ENCODE measurements at regions of chr10 and their contacts with region 1.

Region 1: GRCh38 chr10:101782811-101783735 is at the start of gene NPM3:
- DNase-seq: peak; percentile 94
- ATAC-seq: peak; percentile 82
- H3K4me3 Mint-ChIP-seq: peak within 1 kb of the TSS; percentile 94
- H3K27ac Mint-ChIP-seq: peak within 1 kb of the TSS; percentile 97
- H3K4me1 Mint-ChIP-seq: peaks cover 52% of the 10 kb centered on the region
- H3K27me3 Mint-ChIP-seq: peaks cover 6% of the 10 kb centered on the region
- total RNA-seq, gene NPM3: 207 to 214 TPM

Region 2: GRCh38 chr10:100535715-100536353 is 1247.2 kb before region 1 on chr10 and contains the start of gene HIF1AN:
- CTCF ChIA-PET with region 1: no interaction called
- POLR2A ChIA-PET with region 1: no interaction called
- intact Hi-C with region 1: loop called in 1 of 2 experiments (anchors 10 kb)
- DNase-seq: peak; percentile 93
- ATAC-seq: peak; percentile 96
- H3K4me3 Mint-ChIP-seq: no peak within 1 kb of the TSS
- H3K27ac Mint-ChIP-seq: no peak within 1 kb of the TSS
- H3K4me1 Mint-ChIP-seq: peaks cover 27% of the 10 kb centered on the region
- H3K27me3 Mint-ChIP-seq: no peaks in the 10 kb centered on the region
- total RNA-seq, gene HIF1AN: 45.9 to 50.8 TPM

Region 3: GRCh38 chr10:101297901-101298486 is 485.1 kb before region 1 on chr10:
- CTCF ChIA-PET with region 1: no interaction called
- POLR2A ChIA-PET with region 1: no interaction called
- intact Hi-C with region 1: loop called in 1 of 2 experiments (anchors 5 kb)
- DNase-seq: peak; percentile 89
- ATAC-seq: peak; percentile 90
- H3K4me3 Mint-ChIP-seq: no peak overlapping the region
- H3K27ac Mint-ChIP-seq: no peak overlapping the region
- H3K4me1 Mint-ChIP-seq: peaks cover 2% of the 10 kb centered on the region
- H3K27me3 Mint-ChIP-seq: peaks cover 41% of the 10 kb centered on the region

Region 4: GRCh38 chr10:101587725-101588653 is 195.1 kb before region 1 on chr10 and contains the starts of genes DPCD and POLL:
- CTCF ChIA-PET with region 1: interaction called, 4 read pairs
- POLR2A ChIA-PET with region 1: no interaction called
- intact Hi-C with region 1: loop called (anchors 1 to 5 kb)
- DNase-seq: peak; percentile 97
- ATAC-seq: peak; percentile 98
- H3K4me3 Mint-ChIP-seq: peak within 1 kb of the TSS; percentile 86
- H3K27ac Mint-ChIP-seq: peak within 1 kb of the TSS; percentile 81
- H3K4me1 Mint-ChIP-seq: peaks cover 18% of the 10 kb centered on the region
- H3K27me3 Mint-ChIP-seq: no peaks in the 10 kb centered on the region
- total RNA-seq, gene DPCD: 15.5 to 19.3 TPM
- total RNA-seq, gene POLL: 30.2 to 31.4 TPM

Region 5: GRCh38 chr10:101693978-101694673 is 88.9 kb before region 1 on chr10:
- CTCF ChIA-PET with region 1: interaction called, 10 read pairs
- POLR2A ChIA-PET with region 1: no interaction called
- intact Hi-C with region 1: loop called (anchors 1 to 2 kb)
- DNase-seq: peak; percentile 80
- ATAC-seq: peak; percentile 76
- H3K4me3 Mint-ChIP-seq: peak overlapping the region; percentile 88
- H3K27ac Mint-ChIP-seq: peak overlapping the region; percentile 97
- H3K4me1 Mint-ChIP-seq: peaks cover 43% of the 10 kb centered on the region
- H3K27me3 Mint-ChIP-seq: no peaks in the 10 kb centered on the region

Region 6: DNA sequence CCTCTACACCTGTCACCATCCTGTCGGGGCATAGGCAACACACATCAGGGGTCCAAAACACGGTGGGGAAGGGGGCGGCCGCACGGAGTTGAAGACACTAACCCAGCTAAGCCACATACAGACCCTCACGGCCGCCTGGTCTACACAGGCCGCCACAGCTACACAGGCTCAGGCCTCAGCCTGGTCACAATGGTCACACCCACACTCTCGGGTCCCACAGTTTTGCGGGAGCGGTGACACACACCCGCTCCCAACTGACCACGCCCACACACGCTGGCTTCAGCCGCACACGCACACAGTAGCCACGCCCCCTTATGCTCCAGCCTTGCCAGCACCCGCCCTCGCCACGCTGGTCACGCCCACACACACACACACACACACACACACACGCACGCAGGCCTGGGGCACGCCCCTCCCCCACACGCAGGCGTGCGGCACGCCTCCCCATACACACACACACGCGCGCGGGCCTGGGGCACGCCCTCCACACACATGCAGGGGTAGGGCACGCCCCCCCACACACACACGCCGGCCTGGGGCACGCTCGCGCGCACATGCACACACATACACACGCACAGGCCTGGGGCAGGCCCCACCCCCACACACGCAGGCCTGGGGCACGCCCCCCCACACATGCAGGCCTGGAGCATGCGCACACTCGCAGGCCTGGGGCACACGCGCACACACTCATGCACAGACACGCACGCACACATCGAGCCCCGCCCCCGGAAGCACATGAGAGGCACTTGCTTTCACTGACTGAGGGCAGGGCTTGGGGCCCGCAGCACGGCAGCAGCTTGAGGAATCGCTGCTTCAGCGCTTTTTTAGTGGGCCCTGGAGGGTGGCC is 47.5 kb after region 1 on chr10:
- CTCF ChIA-PET with region 1: interaction called, 7 read pairs
- POLR2A ChIA-PET with region 1: interaction called, 3 read pairs
- intact Hi-C with region 1: loop called (anchors 1 to 5 kb)
- DNase-seq: peak; percentile 96
- ATAC-seq: peak; percentile 77
- H3K4me3 Mint-ChIP-seq: peak overlapping the region; percentile 70
- H3K27ac Mint-ChIP-seq: peak overlapping the region; percentile 98
- H3K4me1 Mint-ChIP-seq: peaks cover 56% of the 10 kb centered on the region
- H3K27me3 Mint-ChIP-seq: no peaks in the 10 kb centered on the region

Region 7: DNA sequence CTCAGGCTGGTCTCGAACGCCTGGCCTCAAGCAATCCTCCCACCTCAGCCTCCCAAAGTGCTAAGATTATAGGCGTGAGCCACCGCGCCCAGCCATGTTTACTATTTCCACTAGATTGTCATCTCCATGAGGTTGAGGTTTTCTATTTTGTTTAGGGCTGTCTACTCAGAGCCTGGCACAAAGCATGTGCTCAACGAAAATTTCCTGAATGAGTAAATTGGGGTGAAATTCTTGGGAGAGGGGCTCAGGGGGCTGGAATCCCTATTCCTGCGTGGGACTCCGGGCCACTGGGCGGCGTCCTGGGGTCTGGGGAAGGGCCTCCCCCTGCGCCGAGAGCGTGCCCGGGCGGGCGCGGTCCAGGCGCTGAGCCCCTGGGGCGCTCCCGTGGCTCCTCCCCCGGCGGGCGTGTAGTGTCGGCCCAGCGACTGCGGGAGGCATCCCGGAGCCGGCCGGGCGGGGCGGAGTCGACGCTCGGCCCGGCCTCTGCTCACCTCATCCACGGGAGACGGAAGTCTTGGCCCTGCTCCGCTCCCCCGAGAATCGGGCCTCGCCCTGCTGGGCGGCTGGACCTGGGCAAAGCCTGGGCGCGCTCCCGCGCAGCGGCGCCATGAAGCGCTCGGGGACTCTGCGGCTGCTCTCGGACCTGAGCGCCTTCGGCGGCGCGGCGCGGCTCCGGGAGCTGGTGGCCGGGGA is 281.9 kb after region 1 on chr10 and contains the start of gene HPS6:
- CTCF ChIA-PET with region 1: interaction called, 6 read pairs
- POLR2A ChIA-PET with region 1: no interaction called
- intact Hi-C with region 1: loop called in 1 of 2 experiments (anchors 1 kb)
- DNase-seq: peak; percentile 94
- ATAC-seq: peak; percentile 99
- H3K4me3 Mint-ChIP-seq: peak within 1 kb of the TSS; percentile 79
- H3K27ac Mint-ChIP-seq: peak within 1 kb of the TSS; percentile 88
- H3K4me1 Mint-ChIP-seq: peaks cover 22% of the 10 kb centered on the region
- H3K27me3 Mint-ChIP-seq: no peaks in the 10 kb centered on the region
- total RNA-seq, gene HPS6: 12.9 to 18.9 TPM

Region 8: GRCh38 chr10:102291221-102291905 is 508.3 kb after region 1 on chr10:
- CTCF ChIA-PET with region 1: no interaction called
- POLR2A ChIA-PET with region 1: no interaction called
- intact Hi-C with region 1: no loop called
- DNase-seq: no peak
- ATAC-seq: no peak
- H3K4me3 Mint-ChIP-seq: no peak overlapping the region
- H3K27ac Mint-ChIP-seq: peak overlapping the region; percentile 37
- H3K4me1 Mint-ChIP-seq: peaks cover 27% of the 10 kb centered on the region
- H3K27me3 Mint-ChIP-seq: no peaks in the 10 kb centered on the region

Measured in activated CD4-positive, alpha-beta T cell treated with anti-CD3 and anti-CD28 coated beads for 36 hours (primary cell).